ENCODE measurements at regions of chr1 and their contacts with region 1.

Region 1: GRCh38 chr1:99685516-99686180 is 39.7 kb downstream of the PALMD start:
- DNase-seq: peak; percentile 13 to 68
- H3K4me3 ChIP-seq: no peak overlapping the region
- H3K27ac ChIP-seq: no peak overlapping the region
- H3K4me1 ChIP-seq: no peaks in the 10 kb centered on the region
- H3K27me3 ChIP-seq: no peaks in the 10 kb centered on the region
- CTCF ChIP-seq: peak; percentile 44 to 77 (median 48)
- EP300 ChIP-seq: no peak
- POLR2A ChIP-seq: no peak
- RAD21 ChIP-seq: peak; percentile 65 to 74

Region 2: GRCh38 chr1:99662581-99663208 is 23.0 kb before region 1 on chr1:
- CTCF ChIA-PET with region 1: interaction called, 20 read pairs
- POLR2A ChIA-PET with region 1: no interaction called
- DNase-seq: no peak
- H3K4me3 ChIP-seq: no peak overlapping the region
- H3K27ac ChIP-seq: no peak overlapping the region
- H3K4me1 ChIP-seq: no peaks in the 10 kb centered on the region
- H3K27me3 ChIP-seq: no peaks in the 10 kb centered on the region
- CTCF ChIP-seq: no peak
- EP300 ChIP-seq: no peak
- POLR2A ChIP-seq: no peak
- RAD21 ChIP-seq: no peak

Region 3: GRCh38 chr1:99672500-99673213 is 13.0 kb before region 1 on chr1:
- CTCF ChIA-PET with region 1: interaction called, 23 read pairs
- POLR2A ChIA-PET with region 1: no interaction called
- DNase-seq: no peak
- H3K4me3 ChIP-seq: no peak overlapping the region
- H3K27ac ChIP-seq: no peak overlapping the region
- H3K4me1 ChIP-seq: no peaks in the 10 kb centered on the region
- H3K27me3 ChIP-seq: peaks cover 0 to 1% (median 0%) of the 10 kb centered on the region in 4 experiments; a peak in 1 of 7 replicates
- CTCF ChIP-seq: no peak
- EP300 ChIP-seq: no peak
- POLR2A ChIP-seq: no peak
- RAD21 ChIP-seq: no peak

Region 4: GRCh38 chr1:99696616-99697015 is 11.0 kb after region 1 on chr1:
- CTCF ChIA-PET with region 1: interaction called, 16 read pairs
- POLR2A ChIA-PET with region 1: no interaction called
- DNase-seq: no peak
- H3K4me3 ChIP-seq: no peak overlapping the region
- H3K27ac ChIP-seq: no peak overlapping the region
- H3K4me1 ChIP-seq: no peaks in the 10 kb centered on the region
- H3K27me3 ChIP-seq: no peaks in the 10 kb centered on the region
- CTCF ChIP-seq: no peak
- EP300 ChIP-seq: no peak
- POLR2A ChIP-seq: no peak
- RAD21 ChIP-seq: no peak

Region 5: DNA sequence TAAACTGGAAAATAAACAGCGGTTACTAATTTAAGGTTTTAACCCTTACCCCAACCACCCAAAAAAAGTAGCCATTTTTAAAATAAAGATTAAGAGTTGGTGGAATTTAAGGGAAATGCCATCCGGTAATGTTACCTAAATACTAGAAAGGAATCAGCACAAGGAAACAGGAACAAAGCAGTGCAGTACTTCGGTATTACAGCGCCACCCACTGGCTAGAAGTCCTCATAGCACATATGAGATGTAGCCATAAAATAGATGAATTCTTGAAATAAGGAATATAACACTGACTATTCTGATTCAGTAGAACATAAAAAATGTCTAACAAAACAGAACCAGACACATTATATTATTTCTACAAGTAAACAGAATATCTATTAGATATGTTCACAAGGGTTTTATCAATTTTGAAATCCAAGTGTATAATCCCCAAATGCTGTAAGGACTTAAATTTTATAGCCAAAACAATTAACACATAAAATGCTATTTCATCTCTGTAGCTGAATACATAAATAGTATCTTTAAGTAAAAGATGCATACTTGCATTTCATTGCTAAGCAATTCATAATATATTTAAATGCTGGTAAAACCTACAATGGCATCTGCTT is 22.0 kb after region 1 on chr1:
- CTCF ChIA-PET with region 1: interaction called, 24 read pairs
- POLR2A ChIA-PET with region 1: no interaction called
- DNase-seq: peak in 1 of 2 experiments; percentile 82
- H3K4me3 ChIP-seq: no peak overlapping the region
- H3K27ac ChIP-seq: no peak overlapping the region
- H3K4me1 ChIP-seq: no peaks in the 10 kb centered on the region
- H3K27me3 ChIP-seq: no peaks in the 10 kb centered on the region
- CTCF ChIP-seq: peak in 2 of 3 experiments; percentile 71 to 84; a peak in 3 of 4 replicates
- EP300 ChIP-seq: no peak
- POLR2A ChIP-seq: no peak
- RAD21 ChIP-seq: peak; percentile 94 to 95

Measured in H1 (cell line).